Head of caudate nucleus (tissue), 42 donors: ENCODE measurements at regions of chr17 and their contacts with region 1.

Region 1: GRCh38 chr17:78798695-78799559 is 16.9 kb upstream of the CYTH1 start:
- DNase-seq: peak in 16 of 42 donors; percentile 25 to 76 (median 46)

Region 2: DNA sequence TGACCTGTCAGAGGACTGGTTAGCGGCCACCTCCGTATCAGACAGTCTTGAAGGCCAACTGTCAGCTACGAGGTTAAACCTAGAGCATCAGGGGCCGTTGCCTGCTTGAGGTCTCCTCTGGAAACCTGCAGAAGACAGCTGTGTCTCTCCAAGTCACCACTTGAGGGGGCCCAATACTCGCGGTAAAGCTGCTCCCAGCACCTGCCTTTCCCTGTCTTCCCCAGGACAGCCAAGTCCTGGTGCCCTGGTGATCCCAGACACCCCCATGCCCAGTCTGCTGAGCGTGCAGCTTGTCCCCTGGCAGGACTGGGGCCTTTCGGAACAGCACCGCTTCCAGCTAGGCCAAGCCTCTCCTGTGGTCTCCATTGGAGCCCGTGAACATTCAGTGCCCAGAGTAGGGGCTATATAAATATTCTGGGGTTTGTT is 301.8 kb before region 1 on chr17:
- intact Hi-C with region 1: loop called (anchors 10 kb)
- DNase-seq: peak; percentile 71 to 95 (median 88)